Activated CD4-positive, alpha-beta T cell treated with anti-CD3 and anti-CD28 coated beads, Interleukin-2, amount 10 ng/mL, durations not matched to agents 24 days and 14 days (primary cell): ENCODE measurements at regions of chr10 and their contacts with region 1.

Region 1: GRCh38 chr10:17001961-17002749 is 127.5 kb downstream of the CUBN start:
- DNase-seq: peak; percentile 89
- H3K4me3 Mint-ChIP-seq: peak overlapping the region; percentile 71
- H3K27ac Mint-ChIP-seq: peak overlapping the region; percentile 95
- H3K4me1 Mint-ChIP-seq: peaks cover 33% of the 10 kb centered on the region
- H3K27me3 Mint-ChIP-seq: peaks cover 57% of the 10 kb centered on the region

Region 2: GRCh38 chr10:16965740-16966447 is 36.3 kb before region 1 on chr10:
- intact Hi-C with region 1: loop called (anchors 5 kb)
- DNase-seq: no peak
- H3K4me3 Mint-ChIP-seq: no peak overlapping the region
- H3K27ac Mint-ChIP-seq: no peak overlapping the region
- H3K4me1 Mint-ChIP-seq: peaks cover 20% of the 10 kb centered on the region
- H3K27me3 Mint-ChIP-seq: peaks cover 12% of the 10 kb centered on the region

Region 3: DNA sequence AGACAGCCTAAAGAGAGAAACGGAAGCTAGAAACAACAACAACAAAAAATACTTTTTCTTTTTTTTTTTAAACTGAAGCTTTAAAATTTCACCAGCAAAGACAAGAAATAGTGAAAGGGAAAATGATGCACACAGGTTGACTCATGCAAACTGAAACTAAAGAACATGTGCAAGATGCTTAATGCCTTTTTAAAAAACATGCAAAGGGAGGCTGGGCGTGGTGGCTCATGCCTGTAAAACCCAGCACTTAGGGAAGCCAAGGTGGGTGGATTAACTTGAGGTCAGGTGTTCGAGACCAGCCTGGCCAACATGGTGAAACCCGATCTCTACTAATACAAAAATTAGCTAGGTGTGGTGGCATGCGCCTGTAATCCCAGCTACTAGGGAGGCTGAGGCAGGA is 142.6 kb after region 1 on chr10:
- intact Hi-C with region 1: loop called (anchors 1 kb)
- DNase-seq: peak; percentile 85
- H3K4me3 Mint-ChIP-seq: no peak overlapping the region
- H3K27ac Mint-ChIP-seq: peak overlapping the region; percentile 61
- H3K4me1 Mint-ChIP-seq: peaks cover 23% of the 10 kb centered on the region
- H3K27me3 Mint-ChIP-seq: peaks cover 5% of the 10 kb centered on the region

Region 4: GRCh38 chr10:17188644-17189172 is 186.6 kb after region 1 on chr10:
- intact Hi-C with region 1: no loop called
- DNase-seq: no peak
- H3K4me3 Mint-ChIP-seq: no peak overlapping the region
- H3K27ac Mint-ChIP-seq: no peak overlapping the region
- H3K4me1 Mint-ChIP-seq: no peaks in the 10 kb centered on the region
- H3K27me3 Mint-ChIP-seq: peaks cover 5% of the 10 kb centered on the region

Region 5: DNA sequence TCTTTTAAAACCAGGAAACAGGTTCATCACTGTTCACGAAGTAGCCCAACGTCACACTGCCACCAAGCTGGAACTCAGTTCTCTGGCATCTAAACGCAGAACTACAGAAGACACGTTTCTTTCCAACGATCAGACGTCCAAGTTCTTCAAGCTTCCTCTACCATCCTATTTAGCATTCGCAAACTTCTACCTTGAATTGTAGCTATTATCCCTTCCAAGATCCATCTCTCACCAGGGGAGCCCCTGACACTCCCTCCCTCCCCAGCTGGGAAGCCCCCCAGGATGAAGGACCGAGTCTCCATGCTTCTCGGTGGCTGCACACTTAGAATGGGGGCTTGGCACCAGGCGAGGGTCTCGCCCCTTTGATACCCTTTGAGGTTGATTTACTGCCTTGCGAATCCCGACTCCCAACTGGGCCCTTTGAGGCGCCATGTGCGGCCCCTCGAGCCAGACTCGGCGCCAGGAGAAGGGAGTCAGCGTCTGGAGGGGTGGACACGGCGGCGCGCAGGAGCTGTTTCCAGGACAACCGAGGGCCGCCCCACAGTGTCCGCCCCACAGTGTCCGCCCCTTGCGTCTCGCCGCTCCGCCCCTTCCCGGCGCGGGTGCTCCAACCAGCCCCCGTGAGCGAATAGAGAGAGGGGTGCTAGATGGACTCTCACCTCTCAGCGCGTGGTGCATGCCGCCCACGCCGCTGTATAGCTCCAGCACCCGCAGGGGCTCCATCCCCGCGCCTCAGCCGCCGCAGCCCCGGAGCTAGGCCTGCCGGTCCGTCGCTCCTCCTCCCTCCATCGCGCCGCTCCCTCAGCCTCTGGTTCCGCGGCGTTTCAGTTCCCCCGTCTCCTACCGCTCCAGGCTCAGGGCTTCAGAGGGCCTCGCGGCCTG is 199.0 kb after region 1 on chr10 and contains the start of gene TRDMT1:
- intact Hi-C with region 1: loop called (anchors 1 kb)
- DNase-seq: peak; percentile 96
- H3K4me3 Mint-ChIP-seq: peak within 1 kb of the TSS; percentile 95
- H3K27ac Mint-ChIP-seq: peak within 1 kb of the TSS; percentile 92
- H3K4me1 Mint-ChIP-seq: peaks cover 33% of the 10 kb centered on the region
- H3K27me3 Mint-ChIP-seq: no peaks in the 10 kb centered on the region
- total RNA-seq, gene TRDMT1: 3.9 and 5.6 TPM in 2 replicates

Region 6: GRCh38 chr10:17216217-17216900 is 214.2 kb after region 1 on chr10:
- intact Hi-C with region 1: loop called (anchors 1 kb)
- DNase-seq: peak; percentile 86
- H3K4me3 Mint-ChIP-seq: peak overlapping the region; percentile 8
- H3K27ac Mint-ChIP-seq: peak overlapping the region; percentile 88
- H3K4me1 Mint-ChIP-seq: peaks cover 32% of the 10 kb centered on the region
- H3K27me3 Mint-ChIP-seq: no peaks in the 10 kb centered on the region

Region 7: GRCh38 chr10:17510242-17510908 is 508.2 kb after region 1 on chr10:
- intact Hi-C with region 1: loop called (anchors 2 kb)
- DNase-seq: no peak
- H3K4me3 Mint-ChIP-seq: no peak overlapping the region
- H3K27ac Mint-ChIP-seq: no peak overlapping the region
- H3K4me1 Mint-ChIP-seq: peaks cover 32% of the 10 kb centered on the region
- H3K27me3 Mint-ChIP-seq: no peaks in the 10 kb centered on the region